Tibial artery (tissue), 4 donors: ENCODE measurements at regions of chr2 and their contacts with region 1.

Region 1: GRCh38 chr2:128180031-128180430 is 89.0 kb downstream of the UGGT1 start:
- DNase-seq: no peak
- H3K4me3 ChIP-seq: no peak overlapping the region
- H3K27ac ChIP-seq: no peak overlapping the region
- H3K4me1 ChIP-seq: no peaks in the 10 kb centered on the region
- H3K27me3 ChIP-seq: no peaks in the 10 kb centered on the region
- CTCF ChIP-seq: no peak

Region 2: DNA sequence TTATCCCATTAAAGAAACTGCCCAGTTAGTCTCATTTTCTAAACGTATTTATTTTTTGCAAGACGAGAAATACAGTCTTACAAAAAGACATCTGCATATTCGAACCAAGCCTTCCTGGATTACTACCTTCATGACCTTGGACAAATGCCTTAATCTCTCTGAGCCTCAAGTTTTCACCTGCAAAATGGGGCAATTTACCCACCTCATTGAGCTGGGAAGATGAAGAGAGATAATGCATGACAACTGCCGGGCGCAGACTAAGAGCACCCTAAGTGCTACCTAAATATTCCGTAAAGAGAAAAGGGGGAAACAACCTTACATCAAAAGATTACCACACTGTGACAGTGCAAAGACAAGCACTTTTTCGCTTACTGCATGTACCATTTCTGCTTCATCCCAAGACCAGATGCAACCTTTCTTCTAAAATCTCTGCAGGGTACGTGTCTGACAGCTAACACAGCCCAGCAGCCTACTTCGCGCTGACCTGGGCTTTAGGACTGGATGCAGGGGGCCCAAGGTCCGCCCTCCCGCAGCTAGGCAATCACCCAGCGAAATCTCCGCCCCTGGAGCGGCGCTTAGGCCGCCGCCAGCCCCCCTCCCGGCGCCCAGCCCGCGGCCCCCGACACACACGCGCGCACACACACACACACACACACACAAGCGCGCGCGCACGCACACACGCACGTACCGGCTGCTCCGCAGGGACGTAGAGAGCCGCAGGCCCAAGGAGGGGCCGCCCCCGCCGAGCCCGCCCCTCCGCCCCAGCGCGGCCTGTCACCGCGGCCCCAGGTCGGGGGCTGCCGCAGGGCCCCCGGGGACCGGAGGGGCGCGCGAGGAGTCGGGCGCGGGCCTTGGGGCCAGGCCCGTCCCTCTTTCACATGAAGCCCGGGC is 793.0 kb before region 1 on chr2:
- intact Hi-C with region 1: no loop called
- DNase-seq: peak; percentile 79 to 91
- H3K4me3 ChIP-seq: peak overlapping the region; percentile 70 to 97
- H3K27ac ChIP-seq: peak overlapping the region; percentile 99 to 100
- H3K4me1 ChIP-seq: peaks cover 0 to 58% (median 16%) of the 10 kb centered on the region in 4 donors
- H3K27me3 ChIP-seq: no peaks in the 10 kb centered on the region
- CTCF ChIP-seq: no peak

Region 3: GRCh38 chr2:128232965-128233789 is 53.1 kb after region 1 on chr2:
- intact Hi-C with region 1: loop called (anchors 5 kb)
- DNase-seq: peak; percentile 85 to 89
- H3K4me3 ChIP-seq: peak overlapping the region; percentile 58 to 78
- H3K27ac ChIP-seq: peak overlapping the region; percentile 53 to 54
- H3K4me1 ChIP-seq: peaks cover 0 to 12% (median 7%) of the 10 kb centered on the region in 4 donors
- H3K27me3 ChIP-seq: no peaks in the 10 kb centered on the region
- CTCF ChIP-seq: peak; percentile 89 to 92